Activated B cell treated with CpG ODN at 0.5 μM for 24 hours (primary cell): ENCODE measurements at regions of chr6 and their contacts with region 1.

Region 1: GRCh38 chr6:26501482-26501986 is 1.4 kb downstream of the BTN1A1 start:
- DNase-seq: peak; percentile 37
- ATAC-seq: peak; percentile 58
- H3K4me3 Mint-ChIP-seq: peak overlapping the region; percentile 85
- H3K27ac Mint-ChIP-seq: no peak overlapping the region
- H3K4me1 Mint-ChIP-seq: peaks cover 25% of the 10 kb centered on the region
- H3K27me3 Mint-ChIP-seq: peaks cover 2% of the 10 kb centered on the region
- CTCF ChIP-seq: no peak

Region 2: DNA sequence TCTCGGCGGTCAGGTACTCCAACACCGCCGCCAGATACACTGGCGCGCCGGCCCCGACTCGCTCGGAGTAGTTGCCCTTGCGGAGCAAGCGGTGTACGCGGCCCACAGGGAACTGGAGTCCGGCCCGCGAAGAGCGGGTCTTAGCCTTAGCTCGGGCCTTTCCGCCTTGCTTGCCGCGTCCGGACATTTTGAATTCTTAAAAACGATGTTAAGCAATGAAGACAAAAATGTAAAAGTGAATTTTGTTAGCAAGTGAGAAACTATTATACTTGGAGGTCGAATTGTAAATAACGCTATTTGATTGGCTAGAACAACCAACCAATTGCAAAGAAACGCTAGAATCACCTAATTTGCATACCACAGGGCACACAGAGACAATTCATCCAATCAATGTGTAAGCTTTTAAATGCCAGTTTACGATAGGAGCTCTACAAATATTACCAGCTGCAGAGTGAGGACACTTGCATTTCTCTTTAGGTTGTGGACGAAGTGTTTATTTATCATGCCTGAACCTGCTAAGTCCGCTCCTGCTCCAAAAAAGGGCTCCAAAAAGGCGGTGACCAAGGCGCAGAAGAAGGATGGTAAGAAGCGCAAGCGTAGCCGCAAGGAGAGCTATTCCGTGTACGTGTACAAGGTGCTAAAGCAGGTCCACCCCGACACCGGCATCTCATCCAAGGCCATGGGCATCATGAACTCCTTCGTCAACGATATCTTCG is 302.3 kb before region 1 on chr6:
- CTCF ChIA-PET with region 1: no interaction called
- POLR2A ChIA-PET with region 1: no interaction called
- intact Hi-C with region 1: no loop called
- DNase-seq: peak; percentile 74
- ATAC-seq: peak; percentile 60
- H3K4me3 Mint-ChIP-seq: peak overlapping the region; percentile 93
- H3K27ac Mint-ChIP-seq: peak overlapping the region; percentile 96
- H3K4me1 Mint-ChIP-seq: peaks cover 54% of the 10 kb centered on the region
- H3K27me3 Mint-ChIP-seq: no peaks in the 10 kb centered on the region
- CTCF ChIP-seq: no peak

Region 3: DNA sequence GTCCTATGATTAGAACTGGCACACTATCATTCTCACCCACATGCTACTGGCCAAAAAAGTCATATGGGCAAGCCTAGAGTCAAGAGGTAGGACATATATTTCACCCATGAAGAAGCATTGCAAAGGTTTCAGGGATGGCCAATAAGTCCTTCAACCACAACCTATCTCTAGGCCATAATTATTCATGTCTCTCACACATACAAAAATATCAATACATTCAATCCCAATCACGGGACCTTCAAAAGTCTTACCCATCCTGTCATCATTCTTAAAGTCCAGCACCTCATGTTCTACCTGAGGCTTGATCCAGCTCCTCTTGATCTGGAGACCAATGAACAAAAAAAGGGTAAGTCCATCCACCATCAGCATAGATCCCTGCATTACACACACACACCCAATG is 14.1 kb before region 1 on chr6:
- CTCF ChIA-PET with region 1: no interaction called
- POLR2A ChIA-PET with region 1: no interaction called
- intact Hi-C with region 1: loop called (anchors 2 kb)
- DNase-seq: no peak
- ATAC-seq: no peak
- H3K4me3 Mint-ChIP-seq: no peak overlapping the region
- H3K27ac Mint-ChIP-seq: no peak overlapping the region
- H3K4me1 Mint-ChIP-seq: no peaks in the 10 kb centered on the region
- H3K27me3 Mint-ChIP-seq: no peaks in the 10 kb centered on the region
- CTCF ChIP-seq: no peak

Region 4: GRCh38 chr6:26514984-26515383 is 13.4 kb after region 1 on chr6:
- CTCF ChIA-PET with region 1: interaction called, 4 read pairs
- POLR2A ChIA-PET with region 1: interaction called, 18 read pairs
- intact Hi-C with region 1: loop called (anchors 2 kb)
- DNase-seq: no peak
- ATAC-seq: no peak
- H3K4me3 Mint-ChIP-seq: no peak overlapping the region
- H3K27ac Mint-ChIP-seq: no peak overlapping the region
- H3K4me1 Mint-ChIP-seq: peaks cover 1% of the 10 kb centered on the region
- H3K27me3 Mint-ChIP-seq: no peaks in the 10 kb centered on the region
- CTCF ChIP-seq: no peak